ENCODE measurements at regions of chr3 and their contacts with region 1.

Region 1: GRCh38 chr3:47513125-47513929 is at the start of gene ELP6:
- DNase-seq: peak; percentile 99
- ATAC-seq: peak; percentile 97
- H3K4me3 Mint-ChIP-seq: peak within 1 kb of the TSS; percentile 91
- H3K27ac Mint-ChIP-seq: peak within 1 kb of the TSS; percentile 96
- H3K4me1 Mint-ChIP-seq: peaks cover 20% of the 10 kb centered on the region
- H3K27me3 Mint-ChIP-seq: no peaks in the 10 kb centered on the region
- total RNA-seq, gene ELP6: 27.8 to 40.3 TPM

Region 2: GRCh38 chr3:47420511-47421484 is 92.5 kb before region 1 on chr3:
- CTCF ChIA-PET with region 1: interaction called, 3 read pairs
- POLR2A ChIA-PET with region 1: no interaction called
- intact Hi-C with region 1: loop called (anchors 1 to 2 kb)
- DNase-seq: peak; percentile 95
- ATAC-seq: peak; percentile 97
- H3K4me3 Mint-ChIP-seq: peak overlapping the region; percentile 17
- H3K27ac Mint-ChIP-seq: peak overlapping the region; percentile 99
- H3K4me1 Mint-ChIP-seq: peaks cover 10% of the 10 kb centered on the region
- H3K27me3 Mint-ChIP-seq: no peaks in the 10 kb centered on the region

Region 3: GRCh38 chr3:47475570-47476329 is 37.6 kb before region 1 on chr3 and contains the start of gene SCAP:
- CTCF ChIA-PET with region 1: interaction called, 3 read pairs
- POLR2A ChIA-PET with region 1: no interaction called
- intact Hi-C with region 1: loop called (anchors 1 kb)
- DNase-seq: peak; percentile 98
- ATAC-seq: peak; percentile 95
- H3K4me3 Mint-ChIP-seq: peak within 1 kb of the TSS; percentile 89
- H3K27ac Mint-ChIP-seq: peak within 1 kb of the TSS; percentile 84
- H3K4me1 Mint-ChIP-seq: peaks cover 33% of the 10 kb centered on the region
- H3K27me3 Mint-ChIP-seq: no peaks in the 10 kb centered on the region
- total RNA-seq, gene SCAP: 44.5 to 51.2 TPM

Region 4: DNA sequence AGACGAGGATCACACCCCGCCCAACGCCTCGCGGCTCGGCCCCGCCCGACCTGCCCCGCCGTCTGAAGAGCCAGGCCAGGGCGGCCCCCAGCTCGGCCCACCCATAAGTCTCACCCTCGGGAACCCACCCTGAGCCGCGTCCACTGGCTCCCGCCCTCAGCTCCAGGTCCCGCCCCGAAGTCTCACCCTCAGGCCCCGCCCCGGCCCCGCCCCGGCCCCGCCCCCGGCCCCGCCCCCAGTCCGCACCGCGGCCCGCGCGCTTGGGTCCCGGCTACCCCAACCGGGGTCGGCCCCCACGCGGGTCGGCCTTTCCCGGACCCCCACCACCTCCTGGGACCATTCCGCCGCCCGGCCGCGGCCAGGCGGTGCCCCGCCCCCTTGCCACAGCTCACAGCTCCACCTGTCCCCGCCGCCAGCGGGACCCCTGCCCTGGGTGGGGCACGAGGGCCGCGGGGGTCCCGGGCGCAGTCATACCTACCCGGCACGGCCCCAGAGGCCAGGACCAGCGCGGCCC is 64.8 kb after region 1 on chr3:
- CTCF ChIA-PET with region 1: no interaction called
- POLR2A ChIA-PET with region 1: no interaction called
- intact Hi-C with region 1: loop called in 1 of 2 experiments (anchors 1 kb)
- DNase-seq: peak; percentile 61
- ATAC-seq: peak; percentile 75
- H3K4me3 Mint-ChIP-seq: peak overlapping the region; percentile 52
- H3K27ac Mint-ChIP-seq: no peak overlapping the region
- H3K4me1 Mint-ChIP-seq: no peaks in the 10 kb centered on the region
- H3K27me3 Mint-ChIP-seq: peaks cover 18% of the 10 kb centered on the region

Region 5: GRCh38 chr3:47791193-47791855 is 278.0 kb after region 1 on chr3:
- CTCF ChIA-PET with region 1: no interaction called
- POLR2A ChIA-PET with region 1: no interaction called
- intact Hi-C with region 1: loop called (anchors 1 to 2 kb)
- DNase-seq: no peak
- ATAC-seq: no peak
- H3K4me3 Mint-ChIP-seq: no peak overlapping the region
- H3K27ac Mint-ChIP-seq: no peak overlapping the region
- H3K4me1 Mint-ChIP-seq: peaks cover 2% of the 10 kb centered on the region
- H3K27me3 Mint-ChIP-seq: no peaks in the 10 kb centered on the region

Region 6: DNA sequence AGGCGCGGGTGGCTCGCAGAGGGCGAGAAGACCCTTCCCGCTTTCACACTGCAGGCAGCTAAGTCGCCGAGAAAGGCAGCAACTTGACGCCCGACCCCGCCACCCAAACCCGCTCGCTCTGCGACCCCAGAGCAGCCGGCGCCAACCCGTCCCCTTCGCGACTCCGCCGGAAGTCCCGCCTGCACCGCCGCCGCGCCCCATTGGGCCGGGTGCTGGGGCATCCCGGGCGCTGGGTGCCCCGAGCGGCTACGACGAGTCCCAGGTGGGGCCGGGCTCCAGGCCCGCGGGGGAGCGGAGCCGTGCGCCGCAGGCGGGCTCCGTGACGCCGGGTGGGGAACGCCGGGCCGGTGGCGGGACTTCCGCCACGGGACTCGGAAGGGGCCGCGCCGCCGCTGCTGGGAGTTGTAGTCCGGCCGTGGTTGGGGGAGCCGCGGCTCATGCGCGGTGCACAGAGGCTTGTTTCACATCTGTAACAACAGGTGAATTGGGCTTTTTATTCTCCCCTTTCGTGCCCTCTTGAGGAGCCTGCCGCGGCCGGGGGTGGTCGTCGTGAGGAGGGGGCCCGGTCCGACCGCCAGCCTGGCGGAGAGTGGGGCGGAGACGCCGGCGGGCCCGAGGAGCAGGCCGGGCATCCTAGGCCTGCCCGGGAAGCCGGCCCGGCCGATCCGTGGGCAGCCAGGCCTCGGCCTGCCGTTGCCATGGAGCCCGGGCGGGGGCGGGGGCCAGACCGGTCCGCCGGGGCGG is 289.6 kb after region 1 on chr3 and contains the start of gene DHX30:
- CTCF ChIA-PET with region 1: interaction called, 4 read pairs
- POLR2A ChIA-PET with region 1: no interaction called
- intact Hi-C with region 1: loop called (anchors 1 kb)
- DNase-seq: peak; percentile 93
- ATAC-seq: peak; percentile 92
- H3K4me3 Mint-ChIP-seq: peak within 1 kb of the TSS; percentile 96
- H3K27ac Mint-ChIP-seq: peak within 1 kb of the TSS; percentile 98
- H3K4me1 Mint-ChIP-seq: peaks cover 24% of the 10 kb centered on the region
- H3K27me3 Mint-ChIP-seq: no peaks in the 10 kb centered on the region
- total RNA-seq, gene DHX30: 81.6 to 82.3 TPM

Measured in activated CD4-positive, alpha-beta T cell treated with anti-CD3 and anti-CD28 coated beads for 36 hours (primary cell).